ENCODE measurements at regions of chr12 and their contacts with region 1.

Region 1: DNA sequence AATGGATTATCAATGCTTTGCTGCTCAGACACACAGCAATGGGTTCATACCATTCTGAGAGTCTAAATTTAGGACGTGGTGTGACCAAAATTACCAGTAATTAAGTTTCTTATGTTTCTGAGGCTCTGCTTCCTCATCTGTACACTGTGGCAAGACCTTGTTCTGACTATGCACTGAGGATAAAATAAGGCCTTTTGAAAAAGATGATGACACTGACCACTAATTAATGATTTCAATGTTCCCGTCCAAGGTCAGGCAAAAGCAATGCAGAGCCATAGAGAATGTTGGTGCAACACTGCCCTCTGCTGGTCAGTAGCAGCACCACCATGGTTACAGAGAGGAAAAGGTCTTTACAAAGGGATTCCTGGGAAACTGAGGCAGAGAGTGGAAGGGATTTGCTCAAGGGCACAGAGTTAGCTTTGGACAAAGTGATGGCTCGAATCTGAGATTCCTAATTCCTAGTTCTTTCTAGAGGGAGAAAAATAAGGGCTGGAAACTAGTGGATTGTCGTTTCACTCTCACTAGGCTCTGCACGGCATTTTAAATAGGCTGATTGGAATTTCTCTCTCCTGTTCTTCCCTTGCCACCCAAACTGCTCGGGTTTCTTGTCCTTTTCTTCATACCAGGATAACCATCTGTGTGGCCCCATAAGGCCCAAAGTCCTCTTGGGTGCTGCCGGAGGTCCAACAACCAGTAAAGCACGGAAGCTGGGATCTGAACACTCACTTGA is 22.3 kb upstream of the P2RX7 start:
- DNase-seq: peak; percentile 78
- ATAC-seq: peak; percentile 95
- H3K4me3 ChIP-seq: no peak overlapping the region
- H3K27ac ChIP-seq: no peak overlapping the region
- H3K4me1 ChIP-seq: 0 out of 2 replicates have a peak, but pooled peaks cover 2% of the 10 kb centered on the region
- H3K27me3 ChIP-seq: no peaks in the 10 kb centered on the region
- CTCF ChIP-seq: peak; percentile 86 to 96 (median 94); a peak in 5 of 6 replicates
- EP300 ChIP-seq: peak; percentile 44 to 82; a peak in 1 of 4 replicates
- POLR2A ChIP-seq: no peak
- RAD21 ChIP-seq: peak; percentile 93

Region 2: DNA sequence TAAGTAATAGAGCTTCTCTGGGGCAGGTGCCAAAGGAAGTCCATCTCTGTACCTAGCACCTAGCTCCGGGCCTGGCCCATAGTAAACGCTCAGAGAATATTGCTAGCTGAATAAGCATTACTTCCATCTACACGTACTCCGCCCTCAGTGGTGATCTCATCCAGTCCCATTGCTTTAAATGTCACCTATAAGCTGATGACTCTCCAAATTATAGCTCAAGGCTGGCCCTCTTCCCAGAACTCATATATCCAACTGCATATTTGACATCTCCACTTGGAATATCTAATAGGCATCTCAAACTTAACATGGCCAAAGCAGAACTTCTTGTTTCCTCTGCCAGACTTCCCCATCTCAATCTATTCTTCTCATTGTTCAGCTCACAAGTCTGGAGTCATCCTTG is 621.4 kb before region 1 on chr12:
- CTCF ChIA-PET with region 1: no interaction called
- POLR2A ChIA-PET with region 1: no interaction called
- RAD21 ChIA-PET with region 1: no interaction called
- SMC1A ChIA-PET with region 1: no interaction called
- in situ Hi-C with region 1: no loop called
- intact Hi-C with region 1: no loop called
- DNase-seq: no peak
- ATAC-seq: no peak
- H3K4me3 ChIP-seq: no peak overlapping the region
- H3K27ac ChIP-seq: no peak overlapping the region
- H3K4me1 ChIP-seq: no peaks in the 10 kb centered on the region; the same call in 1 of the 2 replicates
- H3K27me3 ChIP-seq: no peaks in the 10 kb centered on the region
- CTCF ChIP-seq: no peak
- EP300 ChIP-seq: no peak
- POLR2A ChIP-seq: no peak
- RAD21 ChIP-seq: no peak

Region 3: GRCh38 chr12:120625557-120626419 is 484.6 kb before region 1 on chr12:
- CTCF ChIA-PET with region 1: no interaction called
- POLR2A ChIA-PET with region 1: no interaction called
- RAD21 ChIA-PET with region 1: no interaction called
- SMC1A ChIA-PET with region 1: no interaction called
- in situ Hi-C with region 1: no loop called
- intact Hi-C with region 1: loop called (anchors 5 kb)
- DNase-seq: peak; percentile 11
- ATAC-seq: peak; percentile 90
- H3K4me3 ChIP-seq: no peak overlapping the region; the same call in 1 of the 2 replicates
- H3K27ac ChIP-seq: no peak overlapping the region
- H3K4me1 ChIP-seq: no peaks in the 10 kb centered on the region
- H3K27me3 ChIP-seq: no peaks in the 10 kb centered on the region; a peak in 2 of 4 replicates
- CTCF ChIP-seq: peak in 2 of 3 experiments; percentile 30 to 40; a peak in 3 of 6 replicates
- EP300 ChIP-seq: no peak
- POLR2A ChIP-seq: no peak
- RAD21 ChIP-seq: 0 out of 2 replicates have a peak, but pooled peaks have one; percentile 5

Region 4: DNA sequence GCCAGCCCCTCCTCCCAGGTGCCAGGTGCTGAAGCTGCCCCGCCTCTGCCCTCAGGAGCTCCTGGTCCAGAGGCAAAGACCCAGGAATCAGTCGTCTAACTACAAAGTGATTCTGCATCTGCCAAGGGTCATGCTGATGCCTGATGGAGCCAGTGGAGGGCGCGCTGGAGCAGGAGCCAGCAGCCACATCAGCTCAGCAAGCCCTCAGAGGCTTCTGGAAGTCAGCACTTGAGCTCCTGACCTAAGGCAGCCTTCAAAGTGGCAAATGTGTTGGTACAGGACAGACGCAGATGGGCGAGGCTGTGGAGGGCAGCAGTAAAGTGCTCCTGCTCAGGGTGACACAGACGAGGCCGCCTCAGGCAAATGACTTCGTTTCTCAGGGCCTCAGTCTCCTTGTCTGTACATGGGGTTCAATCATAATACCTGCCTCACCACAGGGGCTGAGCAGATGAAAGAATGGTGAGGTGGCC is 105.0 kb before region 1 on chr12:
- CTCF ChIA-PET with region 1: interaction called, 6 read pairs
- POLR2A ChIA-PET with region 1: no interaction called
- RAD21 ChIA-PET with region 1: interaction called, 4 read pairs
- SMC1A ChIA-PET with region 1: interaction called, 4 read pairs
- in situ Hi-C with region 1: no loop called
- intact Hi-C with region 1: loop called (anchors 1 kb)
- DNase-seq: no peak
- ATAC-seq: peak; percentile 87
- H3K4me3 ChIP-seq: no peak overlapping the region
- H3K27ac ChIP-seq: no peak overlapping the region
- H3K4me1 ChIP-seq: no peaks in the 10 kb centered on the region
- H3K27me3 ChIP-seq: no peaks in the 10 kb centered on the region
- CTCF ChIP-seq: peak; percentile 63 to 77 (median 73)
- EP300 ChIP-seq: no peak
- POLR2A ChIP-seq: no peak
- RAD21 ChIP-seq: peak; percentile 53

Region 5: DNA sequence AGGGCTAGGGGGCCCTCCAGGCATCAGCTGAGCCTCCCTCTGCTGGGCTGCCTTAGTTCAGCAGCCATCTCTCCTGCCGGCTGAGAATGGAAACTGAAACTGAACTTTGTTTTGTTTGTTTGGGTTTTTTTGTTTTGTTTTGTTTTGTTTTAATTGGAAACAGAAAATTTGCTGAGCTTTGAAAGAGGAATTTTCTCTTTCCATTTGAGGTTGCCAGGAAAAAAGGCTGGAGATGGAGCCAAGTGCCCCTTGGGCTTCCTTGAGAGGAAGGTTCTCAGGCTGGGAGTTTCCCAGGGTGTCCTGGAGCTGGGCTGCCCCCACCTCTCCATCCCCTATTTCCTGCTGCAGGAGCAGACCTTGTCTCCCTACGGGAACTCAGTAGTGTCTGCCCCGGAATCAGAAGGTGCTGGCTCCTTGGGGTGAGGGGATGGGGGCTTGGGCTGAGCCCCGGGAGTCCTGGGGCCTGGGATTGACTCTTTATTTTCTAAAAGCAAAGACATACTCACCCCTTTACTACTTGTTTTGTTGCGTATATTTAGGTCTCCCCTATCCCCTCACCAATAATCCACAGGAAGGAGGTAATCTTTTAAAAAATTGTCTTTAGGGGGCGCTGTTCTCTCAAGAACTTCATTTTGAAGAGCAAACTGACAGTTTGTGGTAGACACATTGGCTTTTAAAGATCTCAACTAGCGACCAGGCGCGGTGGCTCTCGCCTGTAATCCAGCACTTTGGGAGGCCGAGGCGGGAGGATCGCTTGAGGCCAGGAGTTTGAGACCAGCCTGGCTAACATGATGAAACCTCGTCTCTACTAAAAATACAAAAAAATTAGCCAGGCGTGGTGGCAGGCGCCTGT is 50.0 kb before region 1 on chr12:
- CTCF ChIA-PET with region 1: interaction called, 61 read pairs
- POLR2A ChIA-PET with region 1: no interaction called
- RAD21 ChIA-PET with region 1: interaction called, 26 read pairs
- SMC1A ChIA-PET with region 1: interaction called, 35 read pairs
- in situ Hi-C with region 1: no loop called
- intact Hi-C with region 1: loop called (anchors 1 kb)
- DNase-seq: peak; percentile 56
- ATAC-seq: peak; percentile 96
- H3K4me3 ChIP-seq: peak overlapping the region; percentile 43
- H3K27ac ChIP-seq: peak overlapping the region; percentile 96
- H3K4me1 ChIP-seq: peaks cover 10% of the 10 kb centered on the region
- H3K27me3 ChIP-seq: no peaks in the 10 kb centered on the region
- CTCF ChIP-seq: peak; percentile 50 to 66 (median 56); a peak in 5 of 6 replicates
- EP300 ChIP-seq: no peak
- POLR2A ChIP-seq: peak; percentile 63
- RAD21 ChIP-seq: peak; percentile 69

Region 6: DNA sequence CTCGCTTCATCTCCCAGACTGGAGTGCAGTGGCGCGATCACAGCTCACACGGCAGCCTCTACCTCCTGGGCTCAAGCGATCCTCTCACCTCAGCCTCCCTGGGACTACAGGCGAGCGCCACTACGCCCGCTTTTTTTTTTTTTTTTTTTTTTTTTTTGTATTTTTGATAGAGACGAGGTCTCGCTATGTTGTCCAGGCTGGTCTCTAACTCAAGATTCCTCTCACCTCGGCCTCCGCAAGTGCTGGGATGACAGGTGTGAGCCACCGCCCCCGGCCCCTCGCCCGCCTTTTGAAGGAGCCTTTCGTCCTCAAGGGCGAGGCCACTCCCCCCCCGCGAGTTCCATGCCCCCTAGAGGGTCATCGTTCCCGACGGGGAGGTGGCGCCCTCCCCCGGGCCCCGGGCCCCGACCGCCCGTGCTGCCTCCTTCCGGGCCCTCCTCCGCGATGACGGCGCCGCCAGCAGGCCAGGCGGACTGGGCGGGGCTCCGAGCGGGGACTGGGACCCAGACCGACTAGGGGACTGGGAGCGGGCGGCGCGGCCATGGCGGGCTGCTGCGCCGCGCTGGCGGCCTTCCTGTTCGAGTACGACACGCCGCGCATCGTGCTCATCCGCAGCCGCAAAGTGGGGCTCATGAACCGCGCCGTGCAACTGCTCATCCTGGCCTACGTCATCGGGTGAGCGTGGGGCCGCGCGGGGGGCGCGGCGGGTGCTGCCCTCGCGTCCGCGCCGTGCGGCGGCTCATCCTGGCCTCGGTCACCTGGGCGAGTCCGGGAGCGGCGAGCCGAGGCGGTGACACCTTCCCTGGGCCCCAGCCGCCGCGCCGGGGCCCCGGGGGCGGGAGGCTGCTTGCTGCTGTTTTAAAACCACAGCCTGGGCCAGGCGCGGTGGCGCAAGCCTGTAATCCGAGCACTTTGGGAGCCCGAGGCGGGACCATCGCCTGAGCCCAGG is 99.5 kb after region 1 on chr12 and contains the start of gene P2RX4:
- CTCF ChIA-PET with region 1: interaction called, 4 read pairs
- POLR2A ChIA-PET with region 1: interaction called, 3 read pairs
- RAD21 ChIA-PET with region 1: interaction called, 3 read pairs
- SMC1A ChIA-PET with region 1: interaction called, 3 read pairs
- in situ Hi-C with region 1: no loop called
- intact Hi-C with region 1: loop called (anchors 5 kb)
- DNase-seq: peak; percentile 44
- ATAC-seq: peak; percentile 92
- H3K4me3 ChIP-seq: peak within 1 kb of the TSS; percentile 71
- H3K27ac ChIP-seq: peak within 1 kb of the TSS; percentile 64
- H3K4me1 ChIP-seq: peaks cover 9% of the 10 kb centered on the region
- H3K27me3 ChIP-seq: no peaks in the 10 kb centered on the region
- CTCF ChIP-seq: peak; percentile 24 to 54 (median 50); a peak in 5 of 6 replicates
- EP300 ChIP-seq: no peak
- POLR2A ChIP-seq: peak; percentile 99
- RAD21 ChIP-seq: peak; percentile 58
- polyA plus RNA-seq, gene P2RX4: 9.0 to 11.3 TPM

Region 7: GRCh38 chr12:121223292-121224285 is 113.2 kb after region 1 on chr12:
- CTCF ChIA-PET with region 1: no interaction called
- POLR2A ChIA-PET with region 1: no interaction called
- RAD21 ChIA-PET with region 1: no interaction called
- SMC1A ChIA-PET with region 1: no interaction called
- in situ Hi-C with region 1: no loop called
- intact Hi-C with region 1: loop called (anchors 5 kb)
- DNase-seq: no peak
- ATAC-seq: peak; percentile 66
- H3K4me3 ChIP-seq: no peak overlapping the region
- H3K27ac ChIP-seq: no peak overlapping the region
- H3K4me1 ChIP-seq: peaks cover 16% of the 10 kb centered on the region
- H3K27me3 ChIP-seq: no peaks in the 10 kb centered on the region
- CTCF ChIP-seq: peak; percentile 40 to 64 (median 41); a peak in 5 of 6 replicates
- EP300 ChIP-seq: no peak
- POLR2A ChIP-seq: no peak
- RAD21 ChIP-seq: peak; percentile 40; the same call in 1 of the 2 replicates

Region 8: GRCh38 chr12:121263206-121263935 is 153.0 kb after region 1 on chr12:
- CTCF ChIA-PET with region 1: no interaction called
- POLR2A ChIA-PET with region 1: no interaction called
- RAD21 ChIA-PET with region 1: no interaction called
- SMC1A ChIA-PET with region 1: no interaction called
- in situ Hi-C with region 1: no loop called
- intact Hi-C with region 1: no loop called
- DNase-seq: no peak
- ATAC-seq: no peak
- H3K4me3 ChIP-seq: no peak overlapping the region
- H3K27ac ChIP-seq: no peak overlapping the region
- H3K4me1 ChIP-seq: no peaks in the 10 kb centered on the region
- H3K27me3 ChIP-seq: no peaks in the 10 kb centered on the region
- CTCF ChIP-seq: no peak
- EP300 ChIP-seq: no peak
- POLR2A ChIP-seq: no peak
- RAD21 ChIP-seq: no peak

Region 9: GRCh38 chr12:121423682-121424623 is 313.6 kb after region 1 on chr12:
- CTCF ChIA-PET with region 1: no interaction called
- POLR2A ChIA-PET with region 1: interaction called, 10 read pairs
- RAD21 ChIA-PET with region 1: no interaction called
- SMC1A ChIA-PET with region 1: no interaction called
- in situ Hi-C with region 1: no loop called
- intact Hi-C with region 1: no loop called
- DNase-seq: no peak
- ATAC-seq: no peak
- H3K4me3 ChIP-seq: no peak overlapping the region
- H3K27ac ChIP-seq: 0 out of 2 replicates have a peak overlapping the region, but pooled peaks have one; percentile 6
- H3K4me1 ChIP-seq: peaks cover 22% of the 10 kb centered on the region
- H3K27me3 ChIP-seq: no peaks in the 10 kb centered on the region
- CTCF ChIP-seq: no peak
- EP300 ChIP-seq: no peak
- POLR2A ChIP-seq: no peak; the same call in 1 of the 2 replicates
- RAD21 ChIP-seq: no peak